H1 (cell line): ENCODE measurements at regions of chr6 and their contacts with region 1.

Region 1: DNA sequence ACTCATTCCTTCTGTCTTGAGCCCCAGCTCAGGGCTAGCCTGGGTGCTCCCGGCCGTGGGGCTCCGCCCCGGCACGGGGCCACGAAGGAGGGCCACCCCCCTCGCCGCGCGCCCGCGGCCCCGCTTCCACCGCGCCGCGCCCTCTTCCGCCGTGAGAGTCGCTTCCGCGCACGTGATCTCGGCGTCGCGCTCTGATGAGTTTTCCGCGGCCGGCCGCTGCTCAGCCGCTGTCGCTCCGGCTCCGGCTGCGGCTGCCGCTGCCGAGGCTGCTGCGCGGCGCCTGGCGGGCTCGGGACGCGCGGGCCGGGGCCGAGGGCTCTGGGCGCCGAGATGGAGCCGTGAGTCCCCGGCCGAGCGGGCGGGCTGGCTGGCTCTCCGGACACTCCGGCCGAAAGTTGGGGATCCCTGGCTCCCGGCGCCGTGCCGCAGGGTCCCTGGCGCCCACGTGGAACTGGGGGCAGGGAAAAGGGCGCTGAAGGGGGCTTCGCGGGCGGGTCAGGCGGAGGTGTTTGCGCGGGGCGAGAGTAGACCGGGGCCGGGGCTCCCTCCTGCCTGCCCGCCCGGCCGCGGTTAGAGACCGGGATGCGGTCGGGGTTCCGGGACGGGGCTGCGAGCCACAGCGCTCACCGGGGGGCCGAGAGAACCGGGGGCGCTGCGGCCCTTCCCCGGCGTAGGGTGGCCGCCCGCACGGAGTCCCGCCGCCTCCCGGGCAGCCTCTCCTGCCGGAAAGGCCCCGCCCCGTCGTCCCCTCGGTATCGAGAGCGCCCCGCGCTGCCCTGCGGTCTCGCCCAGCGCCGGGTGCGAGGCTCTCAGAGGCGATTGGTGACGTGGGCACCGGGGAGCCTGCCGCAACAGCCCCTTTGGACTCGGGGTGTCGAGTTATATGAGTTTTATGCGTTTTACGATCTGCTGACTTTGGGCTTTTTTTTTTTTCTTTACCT is at the start of gene TMEM181:
- DNase-seq: peak in 1 of 2 experiments; percentile 88
- H3K4me3 ChIP-seq: peak within 1 kb of the TSS; percentile 58 to 95 (median 66)
- H3K27ac ChIP-seq: peak within 1 kb of the TSS; percentile 70; the same call in 1 of the 2 replicates
- H3K4me1 ChIP-seq: peaks cover 5 to 9% (median 8%) of the 10 kb centered on the region in 4 experiments; a peak in 6 of 7 replicates
- H3K27me3 ChIP-seq: no peaks in the 10 kb centered on the region
- CTCF ChIP-seq: no peak
- EP300 ChIP-seq: no peak
- POLR2A ChIP-seq: peak; percentile 14 to 78
- RAD21 ChIP-seq: no peak
- total RNA-seq, gene TMEM181: 18.2 and 19.0 TPM in 2 replicates

Region 2: GRCh38 chr6:158536084-158536890 is 23.9 kb before region 1 on chr6:
- CTCF ChIA-PET with region 1: interaction called, 4 read pairs
- POLR2A ChIA-PET with region 1: interaction called, 19 read pairs
- DNase-seq: peak in 1 of 2 experiments; percentile 92
- H3K4me3 ChIP-seq: peak overlapping the region; percentile 77 to 96 (median 80)
- H3K27ac ChIP-seq: peak overlapping the region; percentile 20; the same call in 1 of the 2 replicates
- H3K4me1 ChIP-seq: peaks cover 2 to 3% (median 2%) of the 10 kb centered on the region in 4 experiments; a peak in 2 of 7 replicates
- H3K27me3 ChIP-seq: peaks cover 0 to 3% (median 1%) of the 10 kb centered on the region in 4 experiments; a peak in 3 of 7 replicates
- CTCF ChIP-seq: no peak
- EP300 ChIP-seq: no peak
- POLR2A ChIP-seq: no peak; a peak in 1 of 3 replicates
- RAD21 ChIP-seq: no peak; a peak in 1 of 4 replicates